ENCODE measurements at regions of chr12 and their contacts with region 1.

Region 1: GRCh38 chr12:57782608-57783465 is at the start of gene TSFM:
- DNase-seq: peak; percentile 93 to 96 (median 94)
- H3K4me3 ChIP-seq: peak within 1 kb of the TSS; percentile 92 to 97
- H3K4me3 Mint-ChIP-seq: peak within 1 kb of the TSS; percentile 95 to 100 (median 98)
- H3K27ac ChIP-seq: peak within 1 kb of the TSS; percentile 73
- H3K27ac Mint-ChIP-seq: peak within 1 kb of the TSS; percentile 95 to 100 (median 99)
- H3K4me1 ChIP-seq: peaks cover 59% of the 10 kb centered on the region
- H3K4me1 Mint-ChIP-seq: peaks cover 46 to 57% (median 50%) of the 10 kb centered on the region in 4 donors
- H3K27me3 ChIP-seq: no peaks in the 10 kb centered on the region
- H3K27me3 Mint-ChIP-seq: no peaks in the 10 kb centered on the region
- total RNA-seq, gene TSFM: 18.9 to 22.2 TPM

Region 2: GRCh38 chr12:57590536-57591479 is 192.0 kb before region 1 on chr12 and contains the start of gene PIP4K2C:
- CTCF ChIA-PET with region 1: no interaction called
- POLR2A ChIA-PET with region 1: no interaction called
- intact Hi-C with region 1: no loop called
- DNase-seq: peak; percentile 73 to 83 (median 75)
- H3K4me3 ChIP-seq: peak within 1 kb of the TSS; percentile 54 to 87
- H3K4me3 Mint-ChIP-seq: peak within 1 kb of the TSS; percentile 86 to 92 (median 90)
- H3K27ac ChIP-seq: peak within 1 kb of the TSS; percentile 63
- H3K27ac Mint-ChIP-seq: peak within 1 kb of the TSS; percentile 73 to 96 (median 91)
- H3K4me1 ChIP-seq: peaks cover 27% of the 10 kb centered on the region
- H3K4me1 Mint-ChIP-seq: peaks cover 23 to 39% (median 30%) of the 10 kb centered on the region in 4 donors
- H3K27me3 ChIP-seq: no peaks in the 10 kb centered on the region
- H3K27me3 Mint-ChIP-seq: no peaks in the 10 kb centered on the region
- total RNA-seq, gene PIP4K2C: 32.4 to 36.0 TPM

Region 3: GRCh38 chr12:57751788-57752667 is 30.8 kb before region 1 on chr12 and contains the start of gene CDK4:
- CTCF ChIA-PET with region 1: interaction called, 64 read pairs
- POLR2A ChIA-PET with region 1: interaction called, 36 read pairs
- intact Hi-C with region 1: loop called (anchors 1 kb)
- DNase-seq: peak; percentile 97 to 100 (median 99)
- H3K4me3 ChIP-seq: peak within 1 kb of the TSS; percentile 30 to 80
- H3K4me3 Mint-ChIP-seq: peak within 1 kb of the TSS; percentile 82 to 98 (median 90)
- H3K27ac ChIP-seq: peak within 1 kb of the TSS; percentile 82
- H3K27ac Mint-ChIP-seq: peak within 1 kb of the TSS; percentile 87 to 100 (median 99)
- H3K4me1 ChIP-seq: peaks cover 50% of the 10 kb centered on the region
- H3K4me1 Mint-ChIP-seq: peaks cover 46 to 58% (median 51%) of the 10 kb centered on the region in 4 donors
- H3K27me3 ChIP-seq: no peaks in the 10 kb centered on the region
- H3K27me3 Mint-ChIP-seq: no peaks in the 10 kb centered on the region
- total RNA-seq, gene CDK4: 44.4 to 48.3 TPM

Region 4: DNA sequence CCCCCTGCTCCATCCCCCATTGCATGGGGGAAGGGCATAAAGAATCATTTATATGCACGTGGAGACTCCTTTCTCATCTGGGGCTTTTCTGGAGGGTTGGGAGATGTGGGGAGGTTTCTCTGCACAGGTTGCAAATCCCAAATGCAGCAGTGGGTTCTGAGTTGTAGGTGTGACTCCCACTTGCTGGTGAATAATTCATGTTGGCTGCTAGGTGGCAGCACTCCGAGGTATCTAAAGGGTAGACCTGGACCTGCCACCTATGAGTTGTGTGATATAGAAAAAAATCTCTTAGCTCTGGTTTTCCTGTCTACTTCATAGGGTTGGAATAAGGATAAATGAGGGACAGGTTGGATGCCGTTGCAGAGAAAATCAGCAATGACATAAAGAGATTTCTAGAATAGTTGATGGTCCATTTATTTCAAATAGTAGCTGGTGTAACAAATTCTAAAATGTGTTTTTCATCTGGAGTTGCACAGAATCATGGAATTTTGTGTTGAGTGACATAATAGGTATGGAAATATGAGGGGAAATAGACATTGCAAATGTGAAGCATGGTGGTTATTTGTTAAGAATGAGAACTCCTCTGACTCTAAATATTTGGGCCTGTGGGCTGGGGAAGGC is 23.4 kb before region 1 on chr12:
- CTCF ChIA-PET with region 1: interaction called, 64 read pairs
- POLR2A ChIA-PET with region 1: interaction called, 45 read pairs
- intact Hi-C with region 1: loop called (anchors 1 kb)
- DNase-seq: peak in 4 of 5 donors; percentile 47 to 65 (median 56)
- H3K4me3 ChIP-seq: no peak overlapping the region
- H3K4me3 Mint-ChIP-seq: peak overlapping the region in 3 of 8 donors; percentile 39 to 70 (median 64)
- H3K27ac ChIP-seq: no peak overlapping the region
- H3K27ac Mint-ChIP-seq: peak overlapping the region in 5 of 7 donors; percentile 32 to 82 (median 79)
- H3K4me1 ChIP-seq: peaks cover 33% of the 10 kb centered on the region
- H3K4me1 Mint-ChIP-seq: peaks cover 25 to 54% (median 35%) of the 10 kb centered on the region in 4 donors
- H3K27me3 ChIP-seq: no peaks in the 10 kb centered on the region
- H3K27me3 Mint-ChIP-seq: peaks cover 3 to 6% of the 10 kb centered on the region in 2 donors

Region 5: GRCh38 chr12:57765042-57765697 is 17.7 kb before region 1 on chr12:
- CTCF ChIA-PET with region 1: interaction called, 58 read pairs
- POLR2A ChIA-PET with region 1: interaction called, 45 read pairs
- intact Hi-C with region 1: no loop called
- DNase-seq: peak in 4 of 5 donors; percentile 39 to 51 (median 48)
- H3K4me3 ChIP-seq: peak overlapping the region; percentile 37 to 60
- H3K4me3 Mint-ChIP-seq: peak overlapping the region; percentile 85 to 94 (median 88)
- H3K27ac ChIP-seq: peak overlapping the region; percentile 26
- H3K27ac Mint-ChIP-seq: peak overlapping the region in 6 of 7 donors; percentile 23 to 74 (median 34)
- H3K4me1 ChIP-seq: peaks cover 30% of the 10 kb centered on the region
- H3K4me1 Mint-ChIP-seq: peaks cover 8 to 47% (median 23%) of the 10 kb centered on the region in 4 donors
- H3K27me3 ChIP-seq: peaks cover 19% of the 10 kb centered on the region
- H3K27me3 Mint-ChIP-seq: peaks cover 6 to 13% of the 10 kb centered on the region in 2 donors

Region 6: GRCh38 chr12:57771708-57772428 is 11.0 kb before region 1 on chr12 and contains the start of gene METTL1:
- CTCF ChIA-PET with region 1: interaction called, 38 read pairs
- POLR2A ChIA-PET with region 1: interaction called, 53 read pairs
- intact Hi-C with region 1: loop called (anchors 1 kb)
- DNase-seq: peak; percentile 88 to 95 (median 91)
- H3K4me3 ChIP-seq: peak within 1 kb of the TSS; percentile 98 to 99
- H3K4me3 Mint-ChIP-seq: peak within 1 kb of the TSS; percentile 95 to 100 (median 96)
- H3K27ac ChIP-seq: peak within 1 kb of the TSS; percentile 84
- H3K27ac Mint-ChIP-seq: peak within 1 kb of the TSS; percentile 94 to 99 (median 98)
- H3K4me1 ChIP-seq: peaks cover 30% of the 10 kb centered on the region
- H3K4me1 Mint-ChIP-seq: peaks cover 14 to 33% (median 21%) of the 10 kb centered on the region in 4 donors
- H3K27me3 ChIP-seq: peaks cover 4% of the 10 kb centered on the region
- H3K27me3 Mint-ChIP-seq: peaks cover 0 to 2% of the 10 kb centered on the region in 2 donors
- total RNA-seq, gene METTL1: 9.9 to 10.9 TPM

Region 7: DNA sequence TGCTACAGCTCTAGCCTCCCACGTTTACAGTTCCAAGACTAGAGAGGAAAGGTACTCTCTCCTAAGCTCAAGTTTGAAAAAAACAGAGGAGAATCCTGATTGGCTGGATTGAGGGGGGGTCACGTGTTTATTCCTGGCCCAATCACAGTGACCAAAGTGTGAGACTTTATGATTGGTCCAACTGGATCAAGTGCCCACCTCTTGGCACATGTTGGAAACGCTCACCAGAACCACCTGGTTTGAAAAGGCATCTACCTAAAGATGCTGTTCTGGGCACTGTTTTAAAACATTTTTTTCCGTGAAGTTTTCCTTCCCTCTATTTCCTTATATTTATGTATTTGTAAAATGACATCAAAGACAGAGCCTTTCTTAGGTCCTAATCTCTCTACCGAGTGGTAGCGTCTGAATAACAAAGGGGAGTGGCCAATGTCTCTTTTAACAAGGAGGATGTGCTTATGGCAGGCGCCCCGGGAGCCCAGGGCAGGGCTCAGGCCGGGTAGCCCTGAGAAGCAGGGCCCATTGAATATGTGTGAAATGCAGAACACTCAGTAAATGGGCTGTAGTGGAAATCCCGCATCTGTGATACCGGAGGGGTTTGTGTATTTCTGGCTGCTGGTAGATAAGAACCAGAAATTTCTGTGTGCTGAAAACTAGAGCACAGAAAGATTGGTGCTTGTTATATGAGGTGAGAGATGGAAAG is 304.7 kb after region 1 on chr12:
- CTCF ChIA-PET with region 1: no interaction called
- POLR2A ChIA-PET with region 1: no interaction called
- intact Hi-C with region 1: no loop called
- DNase-seq: no peak
- H3K4me3 ChIP-seq: no peak overlapping the region
- H3K4me3 Mint-ChIP-seq: no peak overlapping the region
- H3K27ac ChIP-seq: no peak overlapping the region
- H3K27ac Mint-ChIP-seq: no peak overlapping the region
- H3K4me1 ChIP-seq: no peaks in the 10 kb centered on the region
- H3K4me1 Mint-ChIP-seq: no peaks in the 10 kb centered on the region
- H3K27me3 ChIP-seq: no peaks in the 10 kb centered on the region
- H3K27me3 Mint-ChIP-seq: peaks cover 15 to 22% of the 10 kb centered on the region in 2 donors

Measured in CD4-positive, alpha-beta memory T cell (primary cell).